HEK293 (cell line): ENCODE measurements at regions of chr14 and their contacts with region 1.

Region 1: DNA sequence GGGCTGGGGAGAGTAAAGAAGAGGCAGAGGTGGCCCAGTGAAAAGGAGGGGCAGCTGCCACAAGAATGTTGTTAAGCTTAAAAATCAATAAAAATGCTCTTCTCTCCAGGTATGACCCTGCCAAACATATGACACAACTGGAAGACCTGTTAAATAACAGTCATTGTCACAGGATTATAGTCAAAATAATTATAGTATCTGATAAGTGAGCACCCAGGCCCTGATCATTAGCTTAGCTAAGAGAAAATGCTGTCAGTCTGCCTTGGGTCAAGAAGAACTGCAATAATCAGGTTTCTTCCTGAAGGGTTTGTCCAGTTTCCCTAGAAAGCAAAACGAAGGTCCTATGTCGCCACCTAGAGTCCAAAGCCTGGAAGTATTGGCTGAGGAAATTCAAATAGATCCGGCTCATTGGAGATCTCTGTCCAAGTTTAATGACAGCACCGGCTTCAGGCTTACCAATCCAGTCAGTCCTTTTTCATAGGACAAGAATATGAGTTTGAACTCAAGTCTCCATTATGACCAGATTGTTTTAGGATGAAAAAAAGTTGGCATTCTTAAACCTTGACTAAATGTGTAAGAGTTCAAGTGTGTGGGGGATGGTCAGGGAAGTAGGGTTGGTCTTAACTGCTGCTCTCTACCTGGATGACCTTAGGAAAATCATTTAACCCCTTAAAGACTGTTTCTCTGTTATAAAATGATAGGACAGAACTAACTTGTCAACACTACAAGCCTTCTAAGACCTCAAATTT is 22.5 kb upstream of the NKX2-8 start:
- H3K4me3 ChIP-seq: no peak overlapping the region
- H3K27ac ChIP-seq: no peak overlapping the region
- H3K4me1 ChIP-seq: no peaks in the 10 kb centered on the region
- CTCF ChIP-seq: peak; percentile 58; the same call in 1 of the 2 replicates

Region 2: DNA sequence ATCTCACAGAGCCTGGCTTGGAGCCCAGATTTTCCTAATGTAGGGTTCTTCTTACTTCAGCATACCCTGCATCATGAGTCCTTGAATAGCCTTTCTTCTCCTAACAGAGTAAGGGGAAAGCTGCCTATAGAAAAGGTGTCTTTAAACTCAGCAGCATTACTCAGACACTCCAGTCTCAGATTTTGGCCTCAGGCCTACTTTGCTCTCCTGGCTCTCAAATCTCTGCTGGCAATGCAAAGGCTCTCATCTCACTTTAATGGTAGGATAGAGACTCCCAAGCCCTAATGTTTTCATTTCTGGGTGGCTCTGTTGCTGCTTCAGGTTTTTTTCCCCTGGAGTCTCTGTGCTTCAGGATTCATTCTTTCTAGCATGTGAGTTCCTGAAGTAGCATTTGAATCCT is 13.4 kb before region 1 on chr14:
- CTCF ChIA-PET with region 1: interaction called, 17 read pairs
- POLR2A ChIA-PET with region 1: no interaction called
- H3K4me3 ChIP-seq: no peak overlapping the region
- H3K27ac ChIP-seq: no peak overlapping the region
- H3K4me1 ChIP-seq: no peaks in the 10 kb centered on the region
- CTCF ChIP-seq: no peak